ENCODE measurements at regions of chr10 and their contacts with region 1.

Region 1: DNA sequence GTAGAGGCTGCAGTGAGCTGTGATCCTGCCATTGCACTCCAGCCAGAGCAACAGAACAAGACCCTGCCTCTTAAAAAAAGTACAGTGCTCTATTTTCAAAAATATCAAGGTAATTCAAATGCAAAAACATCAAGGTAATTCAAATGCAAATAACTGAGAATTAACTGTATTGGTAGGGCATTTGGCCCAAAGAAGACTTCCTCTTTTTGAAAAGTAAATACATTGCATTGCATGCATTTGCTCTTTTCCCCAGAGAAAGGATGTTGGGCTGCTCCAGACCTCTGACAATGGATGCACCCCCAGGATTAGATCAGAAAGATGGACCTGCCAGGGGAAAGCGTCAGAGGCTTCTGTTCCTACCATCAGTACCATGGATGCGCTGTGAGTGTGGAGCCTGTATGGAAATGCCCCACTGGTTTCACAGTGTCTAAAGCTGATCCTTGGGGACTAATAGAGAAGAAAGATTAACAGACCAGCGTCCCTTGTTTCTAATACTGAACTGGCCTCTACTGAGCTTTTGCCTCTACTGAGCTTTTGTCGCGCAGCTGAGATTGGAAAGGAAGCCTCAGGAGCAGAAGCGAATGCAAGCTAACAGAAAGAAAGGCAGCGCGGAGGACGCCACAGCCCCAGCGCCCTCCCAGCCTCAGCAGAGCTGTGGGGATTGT is 93.5 kb upstream of the LYZL2 start:
- DNase-seq: no peak
- ATAC-seq: no peak
- H3K4me3 ChIP-seq: no peak overlapping the region
- H3K27ac ChIP-seq: no peak overlapping the region
- H3K4me1 ChIP-seq: peaks cover 0 to 9% (median 0%) of the 10 kb centered on the region in 9 donors
- H3K27me3 ChIP-seq: peaks cover 0 to 4% (median 0%) of the 10 kb centered on the region in 7 donors
- CTCF ChIP-seq: no peak

Region 2: DNA sequence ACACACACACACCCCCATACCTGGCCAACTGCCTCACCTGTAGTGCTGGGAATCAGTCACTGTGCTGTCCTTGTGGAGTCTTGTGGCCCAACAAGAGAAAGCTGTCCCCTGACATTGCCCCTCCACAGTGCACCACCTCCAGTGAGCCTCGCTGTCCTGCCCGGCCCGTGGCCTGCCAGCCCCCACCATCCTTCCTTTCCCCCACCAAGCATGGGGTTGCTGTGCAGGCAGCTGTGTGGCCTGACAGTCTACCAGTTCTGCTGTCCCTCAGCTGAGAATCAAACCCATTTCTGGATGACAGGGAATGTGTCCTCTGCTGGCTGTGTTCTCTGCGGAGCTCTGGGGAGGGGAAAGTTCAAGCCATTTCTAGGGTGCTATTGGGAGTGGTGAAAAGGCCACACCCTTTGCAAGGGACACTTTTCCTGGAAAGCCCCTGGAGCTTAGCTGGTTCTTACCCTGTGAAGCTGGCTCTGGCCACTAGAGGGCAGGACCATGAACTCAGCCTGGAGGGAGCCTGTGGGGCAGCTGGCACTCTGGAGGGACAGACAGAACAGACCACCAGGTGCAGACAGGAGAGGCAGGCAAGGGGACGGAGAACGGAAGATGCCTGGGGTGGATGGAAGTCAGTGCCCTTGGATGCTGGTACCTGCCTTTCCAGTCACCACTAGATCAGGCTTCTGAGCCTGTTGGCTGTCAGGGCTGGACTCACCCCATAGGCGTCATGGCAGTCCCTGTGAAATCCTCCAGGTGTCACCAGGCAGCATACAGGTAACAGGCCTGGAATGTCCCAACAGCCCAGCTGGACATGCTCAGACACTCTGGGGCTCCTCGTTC is 363.5 kb before region 1 on chr10:
- intact Hi-C with region 1: no loop called
- DNase-seq: peak; percentile 34 to 40
- ATAC-seq: peak in 6 of 8 donors; percentile 47 to 64 (median 58)
- H3K4me3 ChIP-seq: no peak overlapping the region
- H3K27ac ChIP-seq: no peak overlapping the region
- H3K4me1 ChIP-seq: peaks cover 0 to 5% (median 0%) of the 10 kb centered on the region in 9 donors
- H3K27me3 ChIP-seq: no peaks in the 10 kb centered on the region
- CTCF ChIP-seq: peak; percentile 43 to 82 (median 69)

Region 3: DNA sequence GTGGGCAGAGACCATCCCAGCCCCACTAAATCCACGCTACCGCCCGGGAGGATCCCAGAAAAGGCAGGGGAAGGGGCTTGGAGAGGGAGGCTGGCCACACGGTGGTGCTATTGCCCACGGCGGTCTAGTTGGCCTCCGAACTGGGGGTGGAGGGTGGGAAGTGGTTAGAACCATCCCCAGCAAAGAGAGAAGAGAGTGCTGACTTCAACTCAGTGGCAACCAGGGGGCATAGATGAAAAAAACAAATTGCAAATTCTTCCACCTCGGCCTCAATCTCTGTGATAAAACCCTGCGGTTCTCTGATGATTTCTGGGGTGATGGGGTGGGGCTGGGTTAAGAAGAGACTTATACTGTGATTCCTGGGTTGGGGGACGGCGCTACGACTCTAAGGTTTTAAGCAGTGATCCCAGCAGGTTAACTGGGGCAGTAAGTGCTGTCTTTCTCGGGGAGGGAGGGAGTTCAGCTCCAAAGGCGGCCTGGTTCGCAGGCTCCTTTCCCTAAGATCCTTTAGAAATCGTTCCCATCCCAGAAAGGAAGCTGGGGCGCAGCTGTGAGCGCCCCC is 60.9 kb after region 1 on chr10:
- intact Hi-C with region 1: no loop called
- DNase-seq: peak; percentile 90 to 91
- ATAC-seq: peak; percentile 77 to 90 (median 86)
- H3K4me3 ChIP-seq: peak overlapping the region; percentile 51 to 96 (median 75)
- H3K27ac ChIP-seq: peak overlapping the region; percentile 94 to 100 (median 98)
- H3K4me1 ChIP-seq: peaks cover 0 to 46% (median 12%) of the 10 kb centered on the region in 9 donors
- H3K27me3 ChIP-seq: no peaks in the 10 kb centered on the region
- CTCF ChIP-seq: peak; percentile 62 to 90 (median 87)

Region 4: GRCh38 chr10:30840406-30841050 is 117.4 kb after region 1 on chr10:
- intact Hi-C with region 1: no loop called
- DNase-seq: no peak
- ATAC-seq: peak in 5 of 8 donors; percentile 43 to 68 (median 62)
- H3K4me3 ChIP-seq: no peak overlapping the region
- H3K27ac ChIP-seq: peak overlapping the region in 1 of 10 donors; percentile 26
- H3K4me1 ChIP-seq: peaks cover 0 to 32% (median 0%) of the 10 kb centered on the region in 9 donors
- H3K27me3 ChIP-seq: no peaks in the 10 kb centered on the region
- CTCF ChIP-seq: no peak

Region 5: GRCh38 chr10:31490858-31491504 is 767.9 kb after region 1 on chr10:
- intact Hi-C with region 1: loop called in 1 of 10 experiments (anchors 5 kb)
- DNase-seq: peak in 1 of 2 donors; percentile 23
- ATAC-seq: peak in 6 of 8 donors; percentile 41 to 65 (median 51)
- H3K4me3 ChIP-seq: no peak overlapping the region
- H3K27ac ChIP-seq: no peak overlapping the region
- H3K4me1 ChIP-seq: no peaks in the 10 kb centered on the region
- H3K27me3 ChIP-seq: no peaks in the 10 kb centered on the region
- CTCF ChIP-seq: peak; percentile 27 to 68 (median 60)

Region 6: GRCh38 chr10:31947144-31947926 is 1224.2 kb after region 1 on chr10:
- intact Hi-C with region 1: loop called in 1 of 10 experiments (anchors 5 kb)
- DNase-seq: peak in 1 of 2 donors; percentile 22
- ATAC-seq: peak in 7 of 8 donors; percentile 58 to 91 (median 81)
- H3K4me3 ChIP-seq: peak overlapping the region in 2 of 10 donors; percentile 2 to 9
- H3K27ac ChIP-seq: peak overlapping the region in 3 of 10 donors; percentile 9 to 35 (median 34)
- H3K4me1 ChIP-seq: peaks cover 0 to 33% (median 3%) of the 10 kb centered on the region in 9 donors
- H3K27me3 ChIP-seq: no peaks in the 10 kb centered on the region
- CTCF ChIP-seq: peak in 8 of 9 donors; percentile 36 to 66 (median 50)

Measured in heart right ventricle (tissue), 16 donors.